GM18951 (cell line): ENCODE measurements at regions of chr11 and their contacts with region 1.

Region 1: GRCh38 chr11:77101052-77101537 is 1.5 kb upstream of the OMP start:
- POLR2A ChIP-seq: no peak

Region 2: GRCh38 chr11:76823481-76824078 is 277.5 kb before region 1 on chr11:
- in situ Hi-C with region 1: no loop called
- POLR2A ChIP-seq: no peak

Region 3: GRCh38 chr11:77047007-77047927 is 53.8 kb before region 1 on chr11:
- in situ Hi-C with region 1: loop called (anchors 5 kb)
- POLR2A ChIP-seq: no peak